Naive thymus-derived CD4-positive, alpha-beta T cell (primary cell): ENCODE measurements at regions of chr2 and their contacts with region 1.

Region 1: DNA sequence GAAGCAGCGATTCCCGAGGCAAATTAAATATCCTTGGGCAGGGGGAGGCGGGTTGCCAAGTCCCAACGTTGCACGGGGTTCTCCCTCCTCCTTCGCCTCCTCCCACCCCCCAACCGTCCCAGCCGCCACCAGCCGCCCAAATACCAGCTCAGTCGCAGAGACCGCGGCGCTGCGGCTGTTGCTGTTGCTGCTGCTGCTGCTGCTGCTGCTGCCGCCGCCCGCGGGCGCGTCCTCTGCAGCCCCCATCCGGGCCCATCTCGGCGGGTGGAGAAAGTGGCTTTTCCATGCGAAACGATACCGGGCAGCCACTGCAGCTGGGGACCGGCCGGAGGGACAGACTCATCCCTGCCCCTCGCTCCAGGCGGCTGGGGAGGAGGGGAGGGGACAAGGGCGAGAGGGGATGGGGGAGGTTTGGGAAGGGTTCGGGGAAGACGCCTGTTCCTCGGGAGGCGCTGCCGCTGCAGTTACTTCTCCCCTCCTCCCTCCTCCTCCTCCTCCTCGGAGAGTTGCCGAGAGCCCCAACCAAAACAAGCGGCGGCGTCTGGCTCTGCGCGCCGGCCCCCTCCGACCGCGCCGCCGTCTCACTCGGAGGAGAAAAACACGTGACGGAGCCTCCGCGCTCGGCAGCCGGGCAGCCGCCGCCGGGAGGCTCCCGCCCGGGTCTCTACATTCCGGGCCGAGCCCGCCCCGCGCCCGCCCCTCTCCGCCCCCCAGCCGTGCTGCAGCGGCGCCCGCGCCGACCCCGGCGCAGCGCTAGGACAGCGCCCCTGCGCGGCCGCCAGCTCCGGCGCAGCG is at the start of gene IRS1:
- DNase-seq: peak in 8 of 9 donors; percentile 35 to 77 (median 61)
- ATAC-seq: peak; percentile 76
- H3K4me3 ChIP-seq: peak within 1 kb of the TSS; percentile 77
- H3K4me3 Mint-ChIP-seq: peak within 1 kb of the TSS; percentile 89 to 97 (median 91)
- H3K27ac ChIP-seq: peak within 1 kb of the TSS; percentile 70
- H3K27ac Mint-ChIP-seq: peak within 1 kb of the TSS; percentile 52 to 92 (median 75)
- H3K4me1 ChIP-seq: peaks cover 9 to 13% of the 10 kb centered on the region in 2 donors
- H3K4me1 Mint-ChIP-seq: peaks cover 11 to 40% (median 26%) of the 10 kb centered on the region in 7 donors
- H3K27me3 ChIP-seq: no peaks in the 10 kb centered on the region
- H3K27me3 Mint-ChIP-seq: peaks cover 2 to 14% (median 11%) of the 10 kb centered on the region in 5 donors
- total RNA-seq, gene IRS1: 1.3 to 7.1 (median 4.4) TPM

Region 2: GRCh38 chr2:225122583-225123486 is 1676.5 kb before region 1 on chr2:
- CTCF ChIA-PET with region 1: no interaction called
- POLR2A ChIA-PET with region 1: no interaction called
- intact Hi-C with region 1: loop called in 1 of 2 experiments (anchors 5 kb)
- DNase-seq: peak in 4 of 9 donors; percentile 15 to 28 (median 22)
- ATAC-seq: no peak
- H3K4me3 ChIP-seq: no peak overlapping the region
- H3K4me3 Mint-ChIP-seq: peak overlapping the region in 1 of 10 donors; percentile 48
- H3K27ac ChIP-seq: no peak overlapping the region
- H3K27ac Mint-ChIP-seq: peak overlapping the region in 4 of 9 donors; percentile 12 to 83 (median 44)
- H3K4me1 ChIP-seq: no peaks in the 10 kb centered on the region
- H3K4me1 Mint-ChIP-seq: peaks cover 0 to 13% (median 5%) of the 10 kb centered on the region in 7 donors
- H3K27me3 ChIP-seq: no peaks in the 10 kb centered on the region
- H3K27me3 Mint-ChIP-seq: peaks cover 0 to 14% (median 7%) of the 10 kb centered on the region in 5 donors

Region 3: DNA sequence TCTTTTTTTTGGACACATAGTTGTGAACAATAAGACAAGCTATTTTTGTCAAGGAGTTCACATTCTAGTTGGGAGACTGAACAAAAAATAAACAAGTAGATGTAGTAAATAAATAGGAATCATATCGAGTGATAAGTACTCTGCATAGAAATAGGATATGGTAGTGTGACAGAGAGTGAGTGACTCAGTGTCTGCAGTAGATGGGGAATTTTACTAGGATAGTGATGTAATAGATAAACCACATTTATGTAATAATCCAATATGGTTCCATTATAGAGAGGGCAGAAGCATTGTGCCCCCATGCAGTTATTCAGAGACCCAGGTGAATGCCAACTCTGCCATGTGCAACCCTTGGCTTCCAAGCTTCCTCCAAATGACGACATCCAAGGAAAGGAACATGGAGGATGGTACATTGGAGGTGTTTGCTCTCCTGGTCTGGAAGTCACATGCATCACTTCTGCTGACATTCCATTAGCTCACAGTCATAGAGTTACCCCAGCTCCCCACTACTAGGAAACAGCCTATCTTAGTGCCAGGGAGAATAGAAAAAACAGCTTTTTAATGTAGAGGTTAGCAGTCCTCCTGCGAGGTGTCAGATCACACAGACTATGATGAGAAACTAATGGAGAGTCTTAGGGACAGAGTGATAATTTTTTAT is 804.5 kb before region 1 on chr2:
- CTCF ChIA-PET with region 1: no interaction called
- POLR2A ChIA-PET with region 1: no interaction called
- intact Hi-C with region 1: loop called in 1 of 2 experiments (anchors 5 kb)
- DNase-seq: no peak
- ATAC-seq: no peak
- H3K4me3 ChIP-seq: no peak overlapping the region
- H3K4me3 Mint-ChIP-seq: no peak overlapping the region
- H3K27ac ChIP-seq: no peak overlapping the region
- H3K27ac Mint-ChIP-seq: no peak overlapping the region
- H3K4me1 ChIP-seq: no peaks in the 10 kb centered on the region
- H3K4me1 Mint-ChIP-seq: no peaks in the 10 kb centered on the region
- H3K27me3 ChIP-seq: no peaks in the 10 kb centered on the region
- H3K27me3 Mint-ChIP-seq: peaks cover 0 to 14% (median 5%) of the 10 kb centered on the region in 5 donors

Region 4: GRCh38 chr2:226423498-226423960 is 375.8 kb before region 1 on chr2:
- CTCF ChIA-PET with region 1: no interaction called
- POLR2A ChIA-PET with region 1: no interaction called
- intact Hi-C with region 1: loop called (anchors 2 to 10 kb)
- DNase-seq: peak; percentile 16 to 58 (median 45)
- ATAC-seq: peak; percentile 91
- H3K4me3 ChIP-seq: peak overlapping the region; percentile 33
- H3K4me3 Mint-ChIP-seq: peak overlapping the region; percentile 67 to 91 (median 75)
- H3K27ac ChIP-seq: no peak overlapping the region
- H3K27ac Mint-ChIP-seq: peak overlapping the region; percentile 2 to 89 (median 26)
- H3K4me1 ChIP-seq: peaks cover 6 to 9% of the 10 kb centered on the region in 2 donors
- H3K4me1 Mint-ChIP-seq: peaks cover 11 to 22% (median 13%) of the 10 kb centered on the region in 7 donors
- H3K27me3 ChIP-seq: no peaks in the 10 kb centered on the region
- H3K27me3 Mint-ChIP-seq: peaks cover 0 to 29% (median 0%) of the 10 kb centered on the region in 5 donors

Region 5: DNA sequence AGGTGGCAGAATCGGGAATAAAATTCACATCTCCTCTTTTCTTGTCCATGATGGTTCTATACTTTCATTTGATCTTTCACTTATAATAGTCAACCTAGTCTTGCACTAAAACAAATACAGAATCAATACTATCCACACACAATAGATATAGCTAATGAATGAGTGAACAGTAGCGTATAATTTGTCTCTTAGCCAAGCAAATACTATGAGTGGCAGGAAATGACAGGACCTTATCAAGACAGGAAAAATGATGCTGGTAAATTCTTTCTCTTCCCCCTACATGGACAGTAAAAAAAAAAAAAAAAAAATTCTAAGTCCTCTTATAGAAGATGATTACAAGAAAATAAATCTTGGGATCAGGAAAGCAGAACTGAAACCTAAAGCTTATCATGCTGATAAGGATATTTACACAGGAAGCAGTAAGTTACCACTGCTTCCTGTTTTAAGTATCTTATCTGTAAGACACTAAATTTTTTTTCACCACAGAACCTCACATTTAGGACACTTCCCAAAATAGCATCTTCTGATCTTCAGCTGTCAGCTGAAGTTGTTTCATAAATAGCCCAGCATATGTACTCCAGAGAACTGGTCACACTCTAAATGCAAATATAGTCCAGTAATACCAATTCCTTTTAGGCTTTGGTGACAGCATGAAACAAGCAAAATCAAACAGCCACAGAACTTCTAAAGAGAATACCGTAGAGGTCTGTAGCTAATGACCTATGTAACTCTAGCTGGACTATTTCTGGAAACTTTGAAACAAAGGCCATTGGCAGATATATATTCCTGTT is 26.8 kb before region 1 on chr2:
- CTCF ChIA-PET with region 1: interaction called, 5 read pairs
- POLR2A ChIA-PET with region 1: interaction called, 4 read pairs
- intact Hi-C with region 1: loop called in 1 of 2 experiments (anchors 2 kb)
- DNase-seq: peak in 3 of 9 donors; percentile 14 to 26 (median 23)
- ATAC-seq: peak; percentile 80
- H3K4me3 ChIP-seq: peak overlapping the region; percentile 2
- H3K4me3 Mint-ChIP-seq: peak overlapping the region; percentile 27 to 83 (median 76)
- H3K27ac ChIP-seq: no peak overlapping the region
- H3K27ac Mint-ChIP-seq: peak overlapping the region in 8 of 9 donors; percentile 5 to 80 (median 38)
- H3K4me1 ChIP-seq: peaks cover 16 to 19% of the 10 kb centered on the region in 2 donors
- H3K4me1 Mint-ChIP-seq: peaks cover 18 to 30% (median 29%) of the 10 kb centered on the region in 7 donors
- H3K27me3 ChIP-seq: no peaks in the 10 kb centered on the region
- H3K27me3 Mint-ChIP-seq: no peaks in the 10 kb centered on the region

Region 6: DNA sequence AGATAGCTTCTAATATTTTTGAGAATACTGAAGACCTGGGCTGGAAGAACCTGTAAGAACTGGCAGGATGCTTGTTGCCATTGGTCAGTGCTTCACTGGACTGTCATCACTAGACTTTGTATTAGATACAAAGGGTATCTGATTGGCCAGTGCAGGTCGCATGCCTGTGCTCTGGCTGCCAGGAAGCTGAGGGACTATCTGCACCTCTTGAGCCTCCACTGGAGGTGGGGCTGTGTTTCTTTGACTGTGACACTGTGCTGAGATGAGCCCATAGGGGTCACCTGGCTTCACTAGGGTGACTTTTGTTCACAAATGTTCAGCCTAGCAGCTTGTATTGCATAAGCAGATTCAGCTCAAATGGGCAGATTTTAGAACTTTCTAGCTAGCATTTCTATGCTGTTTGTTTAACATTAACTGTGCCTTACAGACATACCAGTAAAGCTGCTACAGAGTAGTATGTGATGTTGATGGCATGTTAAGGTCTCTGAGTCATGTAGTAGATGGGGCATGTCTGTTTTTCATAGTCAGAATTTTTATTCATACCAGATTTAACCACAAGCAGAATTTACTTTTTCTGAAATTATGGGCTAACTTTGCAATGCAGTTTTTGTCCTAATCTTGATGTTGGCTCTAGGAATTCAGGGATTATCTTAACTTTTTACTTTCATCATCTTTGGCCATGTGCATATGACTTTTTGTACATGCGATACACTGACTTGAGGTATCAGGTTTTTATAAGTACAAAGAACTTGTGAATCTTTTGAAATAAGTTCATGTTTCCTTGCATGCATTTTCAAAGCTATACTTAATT is 92.6 kb after region 1 on chr2:
- CTCF ChIA-PET with region 1: no interaction called
- POLR2A ChIA-PET with region 1: no interaction called
- intact Hi-C with region 1: no loop called
- DNase-seq: no peak
- ATAC-seq: no peak
- H3K4me3 ChIP-seq: no peak overlapping the region
- H3K4me3 Mint-ChIP-seq: no peak overlapping the region
- H3K27ac ChIP-seq: no peak overlapping the region
- H3K27ac Mint-ChIP-seq: no peak overlapping the region
- H3K4me1 ChIP-seq: no peaks in the 10 kb centered on the region
- H3K4me1 Mint-ChIP-seq: peaks cover 0 to 19% (median 6%) of the 10 kb centered on the region in 7 donors
- H3K27me3 ChIP-seq: no peaks in the 10 kb centered on the region
- H3K27me3 Mint-ChIP-seq: no peaks in the 10 kb centered on the region

Region 7: GRCh38 chr2:227238238-227239237 is 439.2 kb after region 1 on chr2:
- CTCF ChIA-PET with region 1: no interaction called
- POLR2A ChIA-PET with region 1: no interaction called
- intact Hi-C with region 1: loop called in 1 of 2 experiments (anchors 5 kb)
- DNase-seq: peak; percentile 2 to 58 (median 41)
- ATAC-seq: peak; percentile 47
- H3K4me3 ChIP-seq: no peak overlapping the region
- H3K4me3 Mint-ChIP-seq: no peak overlapping the region
- H3K27ac ChIP-seq: no peak overlapping the region
- H3K27ac Mint-ChIP-seq: no peak overlapping the region
- H3K4me1 ChIP-seq: no peaks in the 10 kb centered on the region
- H3K4me1 Mint-ChIP-seq: no peaks in the 10 kb centered on the region
- H3K27me3 ChIP-seq: no peaks in the 10 kb centered on the region
- H3K27me3 Mint-ChIP-seq: peaks cover 5 to 16% (median 13%) of the 10 kb centered on the region in 5 donors